Posterior vena cava (tissue), 2 donors: ENCODE measurements at regions of chr4 and their contacts with region 1.

Region 1: GRCh38 chr4:69601065-69601464 is 38.4 kb downstream of the UGT2A2 start:
- DNase-seq: no peak

Region 2: DNA sequence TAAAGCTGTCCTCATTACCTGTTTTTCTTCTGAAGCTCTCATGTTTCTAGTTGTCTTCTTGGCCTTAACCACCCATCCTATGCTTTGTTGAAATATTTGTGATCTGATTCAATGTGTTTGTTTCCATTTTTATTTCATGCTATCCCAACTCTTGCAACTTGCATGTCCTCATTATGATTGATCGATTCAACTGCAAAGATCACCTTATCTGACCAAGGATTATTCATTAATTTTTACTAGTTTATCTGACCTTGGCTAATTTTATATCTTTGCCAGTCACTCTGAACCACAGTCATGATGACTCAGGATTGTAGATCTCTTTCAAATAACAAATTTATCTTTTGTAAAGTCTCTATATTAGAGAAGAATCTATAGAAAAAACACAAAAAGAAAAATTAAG is 32.3 kb before region 1 on chr4:
- intact Hi-C with region 1: loop called in 1 of 2 experiments (anchors 2 kb)
- DNase-seq: no peak